ENCODE measurements at regions of chr15 and their contacts with region 1.

Region 1: DNA sequence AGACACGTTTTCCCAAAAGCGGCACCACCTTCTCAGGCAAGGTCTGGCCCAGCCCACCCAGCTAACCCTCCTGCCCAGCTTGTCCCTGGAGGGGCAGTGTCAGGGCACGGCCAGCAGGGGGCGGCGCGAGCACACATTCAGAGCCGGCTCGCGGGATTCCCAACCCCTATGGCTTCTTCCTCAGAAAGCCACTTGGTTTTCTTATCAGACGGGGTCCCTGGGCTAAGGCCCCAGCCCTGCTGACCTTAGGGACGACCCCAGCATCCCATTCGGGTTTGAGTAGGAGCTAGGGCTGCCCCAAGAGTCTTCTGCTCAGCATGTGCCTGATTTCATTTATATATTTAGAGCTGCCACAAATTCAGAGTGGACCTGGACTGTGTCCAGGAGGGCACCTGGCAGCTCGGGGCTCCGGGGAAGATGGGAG is 14.5 kb downstream of the RLBP1 start:
- DNase-seq: peak; percentile 71
- H3K4me3 Mint-ChIP-seq: no peak overlapping the region
- H3K27ac Mint-ChIP-seq: peak overlapping the region; percentile 7
- H3K4me1 Mint-ChIP-seq: peaks cover 33% of the 10 kb centered on the region
- H3K27me3 Mint-ChIP-seq: peaks cover 5% of the 10 kb centered on the region

Region 2: DNA sequence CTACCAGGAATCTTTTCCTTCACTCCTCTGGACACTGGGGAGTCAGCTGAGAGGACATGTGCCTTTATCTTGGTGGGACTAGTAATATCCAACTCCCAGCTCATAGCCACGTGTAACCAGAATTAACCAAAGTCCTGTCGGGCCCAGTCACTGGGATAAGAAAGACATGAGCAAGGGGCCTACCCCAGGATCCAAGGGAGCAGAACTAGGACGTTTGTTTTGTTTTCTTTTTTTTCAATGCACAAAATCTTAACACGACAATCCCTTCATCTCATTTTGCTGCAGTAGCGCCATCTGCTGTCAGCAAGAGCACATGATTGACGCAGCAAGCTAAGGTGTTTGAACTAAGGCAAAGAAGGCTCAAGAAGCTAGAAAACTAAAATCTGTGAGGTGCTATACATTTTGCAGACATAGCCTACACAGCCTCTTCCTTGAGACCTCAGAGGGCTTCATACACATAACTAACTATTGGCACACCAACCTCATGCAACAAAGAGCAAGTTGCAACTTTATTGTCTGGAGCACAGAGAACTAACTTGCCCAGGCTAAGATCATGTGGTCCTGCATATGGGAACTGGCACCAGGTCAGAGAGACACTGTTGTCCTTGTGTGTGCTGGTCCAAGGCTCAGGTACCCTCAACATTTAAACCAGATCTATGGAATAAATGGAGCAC is 29.1 kb before region 1 on chr15:
- CTCF ChIA-PET with region 1: interaction called, 11 read pairs
- POLR2A ChIA-PET with region 1: no interaction called
- DNase-seq: peak; percentile 80
- H3K4me3 Mint-ChIP-seq: no peak overlapping the region
- H3K27ac Mint-ChIP-seq: peak overlapping the region; percentile 58
- H3K4me1 Mint-ChIP-seq: peaks cover 13% of the 10 kb centered on the region
- H3K27me3 Mint-ChIP-seq: no peaks in the 10 kb centered on the region

Region 3: DNA sequence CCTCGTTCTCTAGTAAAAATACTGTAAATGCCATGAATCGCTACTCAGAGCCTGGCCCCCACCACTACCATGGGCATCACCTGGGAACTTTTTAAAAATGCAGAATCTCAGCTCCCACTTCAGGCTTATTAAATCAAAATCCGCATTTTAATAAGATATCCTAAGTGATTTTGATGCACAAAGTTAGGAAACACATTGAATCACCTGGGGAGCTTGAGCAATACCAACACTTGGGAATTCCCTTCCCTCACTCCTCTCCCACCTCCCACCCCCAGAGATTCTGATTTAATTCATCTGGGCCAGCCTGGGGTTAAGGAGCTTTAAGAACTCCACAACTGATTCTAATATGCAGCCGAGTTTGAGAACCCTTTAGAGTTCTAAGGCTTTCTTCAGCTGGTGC is 12.3 kb before region 1 on chr15:
- CTCF ChIA-PET with region 1: interaction called, 14 read pairs
- POLR2A ChIA-PET with region 1: no interaction called
- DNase-seq: no peak
- H3K4me3 Mint-ChIP-seq: no peak overlapping the region
- H3K27ac Mint-ChIP-seq: no peak overlapping the region
- H3K4me1 Mint-ChIP-seq: peaks cover 7% of the 10 kb centered on the region
- H3K27me3 Mint-ChIP-seq: no peaks in the 10 kb centered on the region

Region 4: DNA sequence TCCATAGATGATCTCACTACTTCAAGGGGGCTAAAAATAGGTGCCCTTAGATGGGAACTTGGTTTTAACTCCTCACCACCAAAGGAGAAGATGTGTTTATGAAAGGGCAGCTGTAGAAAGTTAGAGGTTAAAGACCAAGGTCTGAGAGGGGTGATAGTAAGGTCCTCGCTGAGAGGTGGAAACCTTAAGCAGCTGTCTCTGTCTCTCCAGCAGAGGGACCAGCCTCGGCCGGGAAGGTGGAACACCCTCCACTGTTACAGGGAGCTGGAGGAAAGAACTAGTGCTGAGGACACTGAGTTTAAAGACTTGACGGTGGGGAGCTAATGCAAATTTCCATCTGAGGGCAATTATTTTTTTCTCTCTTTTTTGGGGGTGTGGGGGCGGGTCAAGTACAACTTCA is 23.4 kb after region 1 on chr15:
- CTCF ChIA-PET with region 1: interaction called, 15 read pairs
- POLR2A ChIA-PET with region 1: no interaction called
- DNase-seq: no peak
- H3K4me3 Mint-ChIP-seq: no peak overlapping the region
- H3K27ac Mint-ChIP-seq: no peak overlapping the region
- H3K4me1 Mint-ChIP-seq: peaks cover 3% of the 10 kb centered on the region
- H3K27me3 Mint-ChIP-seq: peaks cover 23% of the 10 kb centered on the region

Measured in activated CD4-positive, alpha-beta T cell treated with anti-CD3 and anti-CD28 coated beads, Interleukin-2, amount 10 ng/mL, durations not matched to agents 7 days and 5 days (primary cell).